ENCODE measurements at regions of chr9 and their contacts with region 1.

Region 1: GRCh38 chr9:95726756-95727155 is 148.7 kb upstream of the ERCC6L2 start:
- DNase-seq: peak in 3 of 14 experiments; percentile 42 to 54 (median 43)
- ATAC-seq: no peak
- H3K4me3 ChIP-seq: no peak overlapping the region
- H3K4me3 Mint-ChIP-seq: no peak overlapping the region
- H3K27ac ChIP-seq: no peak overlapping the region
- H3K27ac Mint-ChIP-seq: no peak overlapping the region
- H3K4me1 ChIP-seq: peaks cover 26% of the 10 kb centered on the region
- H3K4me1 Mint-ChIP-seq: peaks cover 47% of the 10 kb centered on the region
- H3K27me3 ChIP-seq: no peaks in the 10 kb centered on the region
- H3K27me3 Mint-ChIP-seq: no peaks in the 10 kb centered on the region
- CTCF ChIP-seq: no peak

Region 2: GRCh38 chr9:95462249-95463147 is 264.3 kb before region 1 on chr9:
- CTCF ChIA-PET with region 1: no interaction called
- POLR2A ChIA-PET with region 1: no interaction called
- intact Hi-C with region 1: loop called in 1 of 2 experiments (anchors 1 kb)
- DNase-seq: peak; percentile 56 to 94 (median 66)
- ATAC-seq: peak; percentile 94
- H3K4me3 ChIP-seq: peak overlapping the region; percentile 41
- H3K4me3 Mint-ChIP-seq: peak overlapping the region; percentile 89
- H3K27ac ChIP-seq: no peak overlapping the region
- H3K27ac Mint-ChIP-seq: peak overlapping the region; percentile 57
- H3K4me1 ChIP-seq: peaks cover 28% of the 10 kb centered on the region
- H3K4me1 Mint-ChIP-seq: peaks cover 47% of the 10 kb centered on the region
- H3K27me3 ChIP-seq: no peaks in the 10 kb centered on the region
- H3K27me3 Mint-ChIP-seq: no peaks in the 10 kb centered on the region
- CTCF ChIP-seq: no peak

Measured in CD4-positive, alpha-beta T cell (primary cell).